Heart right ventricle (tissue), 16 donors: ENCODE measurements at regions of chr15 and their contacts with region 1.

Region 1: DNA sequence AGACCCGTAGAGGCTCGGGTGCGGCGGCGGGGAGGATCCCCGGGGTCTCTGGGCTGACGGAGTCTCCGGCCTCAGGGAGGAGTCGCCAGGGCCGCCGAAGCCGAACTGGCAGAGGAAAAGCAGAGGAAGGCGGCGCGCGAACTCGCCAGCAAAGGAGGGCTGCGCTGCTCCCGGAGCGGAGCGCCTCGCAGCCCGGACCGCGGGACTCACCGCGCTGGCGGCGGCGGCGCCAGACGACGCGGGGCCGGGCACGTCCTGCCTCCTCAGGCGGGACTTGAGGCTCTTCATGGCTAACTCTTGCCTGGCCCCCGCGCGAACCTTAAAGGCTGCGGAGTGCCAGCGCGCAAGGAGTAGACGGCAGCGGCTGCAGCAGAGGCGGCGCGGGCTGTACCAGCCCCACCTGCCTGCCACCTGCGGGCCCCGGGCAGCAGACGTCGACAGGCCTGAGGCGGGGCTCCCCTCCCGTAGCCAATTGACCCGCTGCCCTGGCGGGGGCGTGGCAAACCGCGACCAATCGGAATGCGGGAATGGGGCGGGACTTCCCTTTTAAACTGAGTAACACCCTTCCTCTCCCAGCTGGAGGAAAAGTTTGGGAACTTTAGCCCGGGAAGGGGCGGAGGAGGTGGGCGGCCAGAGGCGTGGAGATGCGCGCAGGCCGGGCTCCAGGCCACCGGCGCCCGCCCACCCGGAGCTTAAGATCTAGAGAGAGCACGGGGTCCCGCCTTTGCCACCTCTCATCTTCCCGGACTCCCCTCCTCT is at the start of gene UACA:
- DNase-seq: peak; percentile 96 to 98
- ATAC-seq: peak; percentile 97 to 98 (median 98)
- H3K4me3 ChIP-seq: peak within 1 kb of the TSS; percentile 45 to 99 (median 86)
- H3K27ac ChIP-seq: peak within 1 kb of the TSS; percentile 91 to 100 (median 94)
- H3K4me1 ChIP-seq: peaks cover under 1 to 75% (median 67%) of the 10 kb centered on the region in 9 donors
- H3K27me3 ChIP-seq: peaks cover 0 to 42% (median 0%) of the 10 kb centered on the region in 7 donors
- CTCF ChIP-seq: peak in 5 of 9 donors; percentile 12 to 57 (median 46)
- total RNA-seq, gene UACA: 38.4 to 60.3 (median 47.1) TPM

Region 2: DNA sequence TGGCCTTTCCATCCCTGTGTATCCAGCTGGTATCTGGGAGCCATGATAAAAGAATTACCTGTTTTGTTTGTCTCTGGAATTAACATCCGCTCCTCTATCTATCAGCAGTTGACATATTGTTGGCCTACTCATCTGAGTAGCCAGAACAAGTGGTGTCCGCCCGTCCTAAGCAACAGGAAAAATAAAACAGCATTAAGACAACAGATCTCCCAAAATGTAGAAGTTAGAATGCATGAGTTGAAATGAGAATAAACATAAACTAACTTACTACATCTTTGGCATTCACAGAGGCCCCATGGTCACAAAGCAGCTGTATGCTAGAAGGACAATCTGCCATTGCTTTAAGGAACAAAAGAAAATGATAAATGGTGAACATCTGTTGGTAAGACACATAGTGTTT is 75.8 kb before region 1 on chr15:
- intact Hi-C with region 1: loop called in 3 of 10 experiments (anchors 5 to 10 kb)
- DNase-seq: no peak
- ATAC-seq: no peak
- H3K4me3 ChIP-seq: no peak overlapping the region
- H3K27ac ChIP-seq: no peak overlapping the region
- H3K4me1 ChIP-seq: peaks cover 0 to 49% (median 25%) of the 10 kb centered on the region in 9 donors
- H3K27me3 ChIP-seq: no peaks in the 10 kb centered on the region
- CTCF ChIP-seq: no peak

Region 3: DNA sequence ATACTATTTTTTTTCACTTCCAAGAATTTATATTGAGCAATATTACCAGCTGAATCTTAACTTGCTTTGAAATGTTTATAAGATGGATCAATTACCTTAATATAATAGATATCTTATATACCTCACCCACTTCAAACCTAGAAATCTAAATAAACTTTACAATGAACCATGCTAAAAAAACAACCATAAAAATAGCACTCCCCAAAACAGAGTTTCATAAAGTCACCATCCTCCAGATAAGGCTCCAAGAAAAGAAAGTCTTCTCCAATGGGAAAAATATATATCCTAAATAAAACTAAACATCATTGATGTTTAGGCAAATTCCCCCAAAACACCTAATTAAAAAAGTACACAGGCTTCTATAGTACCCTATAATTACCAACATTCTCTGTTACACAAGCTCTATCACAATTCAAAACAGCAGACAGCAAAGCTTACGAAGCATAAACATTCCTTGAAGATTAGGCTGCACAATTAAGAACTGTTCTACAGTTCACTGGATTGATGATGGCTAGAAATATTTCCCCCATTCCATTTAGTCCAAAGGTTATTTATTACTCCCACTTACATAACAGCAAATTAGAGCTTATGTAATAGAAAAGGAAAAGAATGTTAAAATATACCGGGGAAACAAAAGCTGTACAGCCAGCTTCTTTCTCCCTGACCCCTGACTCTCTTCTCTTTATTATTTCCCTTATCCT is 49.4 kb before region 1 on chr15:
- intact Hi-C with region 1: loop called in 1 of 10 experiments (anchors 10 kb)
- DNase-seq: no peak
- ATAC-seq: peak in 5 of 8 donors; percentile 13 to 38 (median 24)
- H3K4me3 ChIP-seq: peak overlapping the region in 1 of 10 donors; percentile 5
- H3K27ac ChIP-seq: peak overlapping the region in 6 of 10 donors; percentile 26 to 61 (median 54)
- H3K4me1 ChIP-seq: peaks cover 6 to 71% (median 50%) of the 10 kb centered on the region in 9 donors
- H3K27me3 ChIP-seq: no peaks in the 10 kb centered on the region
- CTCF ChIP-seq: no peak

Region 4: DNA sequence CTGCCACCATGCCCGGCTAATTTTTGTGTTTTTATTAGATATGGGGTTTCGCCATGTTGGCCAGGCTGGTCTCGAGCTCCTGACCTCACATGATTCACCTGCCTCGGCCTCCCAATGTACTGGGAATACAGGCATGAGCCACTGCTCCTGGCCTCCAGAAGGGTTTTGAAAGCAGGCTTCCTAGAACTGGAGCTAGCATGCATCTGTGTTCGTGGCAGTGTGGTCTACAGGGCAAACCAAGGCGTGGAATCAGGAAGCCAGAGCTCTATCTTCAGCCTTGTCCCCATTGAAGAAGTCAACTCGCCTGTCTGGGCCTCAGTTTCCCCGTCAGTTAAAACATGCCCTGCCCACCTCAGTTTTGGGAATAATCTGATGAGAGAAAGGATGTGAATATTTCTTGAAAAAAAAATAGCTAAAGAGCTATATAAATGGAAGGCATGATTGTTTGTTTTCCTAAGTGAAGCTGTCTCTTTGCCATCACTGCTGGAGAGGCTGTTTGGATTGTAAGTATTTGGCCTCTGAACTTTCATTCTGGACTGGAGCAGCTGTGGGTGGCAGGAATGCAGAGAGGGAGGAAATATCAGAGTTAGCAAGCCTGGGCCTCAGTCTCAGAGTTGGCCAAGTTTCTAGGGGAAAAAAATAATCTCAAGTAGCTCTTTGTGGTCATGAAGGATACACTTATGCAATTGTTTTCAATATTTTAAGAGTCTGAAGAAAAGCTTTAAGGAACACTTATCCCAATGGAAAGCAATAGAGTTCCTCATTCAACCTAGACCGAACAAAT is 36.6 kb after region 1 on chr15:
- intact Hi-C with region 1: loop called in 1 of 10 experiments (anchors 2 kb)
- DNase-seq: peak in 1 of 2 donors; percentile 35
- ATAC-seq: peak; percentile 72 to 88 (median 78)
- H3K4me3 ChIP-seq: no peak overlapping the region
- H3K27ac ChIP-seq: peak overlapping the region; percentile 6 to 78 (median 62)
- H3K4me1 ChIP-seq: peaks cover 0 to 34% (median 18%) of the 10 kb centered on the region in 9 donors
- H3K27me3 ChIP-seq: no peaks in the 10 kb centered on the region
- CTCF ChIP-seq: no peak

Region 5: GRCh38 chr15:70806992-70807712 is 43.9 kb after region 1 on chr15:
- intact Hi-C with region 1: loop called in 1 of 10 experiments (anchors 5 kb)
- DNase-seq: peak; percentile 49 to 62
- ATAC-seq: peak in 6 of 8 donors; percentile 19 to 63 (median 55)
- H3K4me3 ChIP-seq: no peak overlapping the region
- H3K27ac ChIP-seq: peak overlapping the region in 5 of 10 donors; percentile 14 to 74 (median 50)
- H3K4me1 ChIP-seq: peaks cover 0 to 38% (median 12%) of the 10 kb centered on the region in 9 donors
- H3K27me3 ChIP-seq: no peaks in the 10 kb centered on the region
- CTCF ChIP-seq: no peak